ENCODE measurements at regions of chr20 and their contacts with region 1.

Region 1: DNA sequence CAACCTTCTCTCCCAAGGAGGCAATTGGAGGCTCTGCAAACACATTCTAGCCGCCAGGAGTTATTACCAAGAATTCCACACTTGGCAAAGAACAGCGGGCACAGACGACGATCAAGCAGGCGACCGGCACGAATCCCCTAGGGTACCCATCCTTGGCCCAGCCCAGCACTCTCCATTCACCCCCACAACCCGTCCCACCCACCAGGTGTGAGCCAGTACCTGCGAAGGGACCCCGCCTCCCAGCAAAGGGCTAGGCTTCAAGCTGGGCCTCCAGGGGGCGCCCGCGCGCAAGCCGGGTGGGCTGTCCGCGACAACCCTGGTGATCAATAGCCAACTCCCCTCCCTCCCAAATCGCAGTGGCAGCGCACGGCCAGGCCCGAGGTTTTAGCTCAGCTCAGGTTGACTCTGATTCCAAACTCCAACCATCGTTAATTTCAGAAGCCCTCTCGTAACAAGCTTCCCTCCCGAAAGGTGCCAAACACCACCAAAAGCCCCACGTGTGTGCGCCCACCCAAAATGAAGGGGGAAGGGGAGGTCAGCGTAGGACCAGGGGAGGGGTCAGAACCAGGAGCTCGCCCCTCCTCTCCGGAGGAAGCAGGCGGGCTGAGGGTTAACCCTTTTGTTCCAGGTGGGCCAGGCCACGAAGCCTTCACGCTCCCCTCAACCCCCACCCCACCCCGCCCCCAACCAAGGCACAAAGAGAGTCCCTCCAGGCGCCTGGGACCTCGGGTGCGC is 2.1 kb downstream of the SALL4 start:
- DNase-seq: peak; percentile 92
- H3K4me3 ChIP-seq: peak overlapping the region; percentile 62 to 67
- H3K27ac ChIP-seq: no peak overlapping the region; a peak in 1 of 4 replicates
- H3K4me1 ChIP-seq: peaks cover 9 to 14% of the 10 kb centered on the region in 2 experiments; a peak in 2 of 4 replicates
- H3K27me3 ChIP-seq: no peaks in the 10 kb centered on the region
- CTCF ChIP-seq: peak; percentile 90
- EP300 ChIP-seq: no peak
- RAD21 ChIP-seq: peak; percentile 78

Region 2: DNA sequence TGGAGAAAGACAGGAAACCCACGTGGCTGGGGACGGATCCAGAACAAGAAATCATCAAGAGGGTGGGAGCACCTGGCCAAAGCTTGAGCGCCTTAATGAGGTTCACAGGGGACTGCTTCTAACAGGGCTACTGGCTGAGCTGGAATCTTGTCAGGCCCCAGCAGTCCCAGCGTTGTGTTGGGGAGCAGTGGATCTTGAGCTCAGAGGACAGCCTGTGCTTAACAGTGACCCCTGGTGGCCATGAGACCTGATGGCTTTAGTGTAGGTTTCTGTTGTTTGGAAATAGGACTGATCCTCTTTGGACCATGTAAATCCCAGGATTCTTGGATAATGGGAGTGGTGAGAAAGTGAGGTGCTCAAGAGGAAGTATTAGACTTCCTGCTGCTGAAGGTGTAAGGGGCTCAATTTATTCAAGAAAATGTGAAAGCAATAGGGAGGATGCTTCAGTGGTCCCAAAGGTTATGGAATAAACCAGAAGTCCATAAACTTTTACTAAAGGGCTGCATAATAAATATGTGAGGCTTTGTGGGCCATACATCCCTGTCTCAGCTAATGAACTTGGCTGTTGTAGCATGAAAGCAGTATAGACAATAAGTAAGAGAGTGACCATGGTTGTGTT is 473.9 kb before region 1 on chr20:
- CTCF ChIA-PET with region 1: no interaction called
- POLR2A ChIA-PET with region 1: no interaction called
- DNase-seq: peak; percentile 52
- H3K4me3 ChIP-seq: no peak overlapping the region
- H3K27ac ChIP-seq: peak overlapping the region in 1 of 2 experiments; percentile 98; a peak in 2 of 4 replicates
- H3K4me1 ChIP-seq: 0 out of 4 replicates have a peak, but pooled peaks cover 0 to 3% of the 10 kb centered on the region in 2 experiments
- H3K27me3 ChIP-seq: no peaks in the 10 kb centered on the region
- CTCF ChIP-seq: peak; percentile 52
- EP300 ChIP-seq: no peak
- RAD21 ChIP-seq: peak; percentile 51

Region 3: GRCh38 chr20:51715163-51715860 is 84.9 kb before region 1 on chr20:
- CTCF ChIA-PET with region 1: interaction called, 14 read pairs
- POLR2A ChIA-PET with region 1: no interaction called
- DNase-seq: peak; percentile 50
- H3K4me3 ChIP-seq: peak overlapping the region in 1 of 2 experiments; percentile 23; a peak in 2 of 4 replicates
- H3K27ac ChIP-seq: peak overlapping the region in 1 of 2 experiments; percentile 71; a peak in 2 of 4 replicates
- H3K4me1 ChIP-seq: peaks cover 4 to 9% of the 10 kb centered on the region in 2 experiments; a peak in 3 of 4 replicates
- H3K27me3 ChIP-seq: no peaks in the 10 kb centered on the region
- CTCF ChIP-seq: no peak
- EP300 ChIP-seq: no peak
- RAD21 ChIP-seq: no peak

Region 4: GRCh38 chr20:51784299-51784698 is 15.9 kb before region 1 on chr20:
- CTCF ChIA-PET with region 1: interaction called, 28 read pairs
- POLR2A ChIA-PET with region 1: no interaction called
- DNase-seq: no peak
- H3K4me3 ChIP-seq: no peak overlapping the region
- H3K27ac ChIP-seq: no peak overlapping the region
- H3K4me1 ChIP-seq: no peaks in the 10 kb centered on the region
- H3K27me3 ChIP-seq: no peaks in the 10 kb centered on the region
- CTCF ChIP-seq: no peak
- EP300 ChIP-seq: no peak
- RAD21 ChIP-seq: no peak

Region 5: GRCh38 chr20:51823813-51824212 is 23.6 kb after region 1 on chr20:
- CTCF ChIA-PET with region 1: interaction called, 14 read pairs
- POLR2A ChIA-PET with region 1: no interaction called
- DNase-seq: no peak
- H3K4me3 ChIP-seq: no peak overlapping the region
- H3K27ac ChIP-seq: no peak overlapping the region
- H3K4me1 ChIP-seq: no peaks in the 10 kb centered on the region
- H3K27me3 ChIP-seq: no peaks in the 10 kb centered on the region
- CTCF ChIP-seq: no peak
- EP300 ChIP-seq: no peak
- RAD21 ChIP-seq: no peak

Region 6: GRCh38 chr20:51966291-51966971 is 166.2 kb after region 1 on chr20:
- CTCF ChIA-PET with region 1: interaction called, 25 read pairs
- POLR2A ChIA-PET with region 1: no interaction called
- DNase-seq: peak; percentile 74
- H3K4me3 ChIP-seq: no peak overlapping the region; a peak in 1 of 4 replicates
- H3K27ac ChIP-seq: no peak overlapping the region
- H3K4me1 ChIP-seq: peaks cover 0 to 7% of the 10 kb centered on the region in 2 experiments; a peak in 3 of 4 replicates
- H3K27me3 ChIP-seq: no peaks in the 10 kb centered on the region
- CTCF ChIP-seq: peak; percentile 75
- EP300 ChIP-seq: no peak
- RAD21 ChIP-seq: peak; percentile 79

Region 7: DNA sequence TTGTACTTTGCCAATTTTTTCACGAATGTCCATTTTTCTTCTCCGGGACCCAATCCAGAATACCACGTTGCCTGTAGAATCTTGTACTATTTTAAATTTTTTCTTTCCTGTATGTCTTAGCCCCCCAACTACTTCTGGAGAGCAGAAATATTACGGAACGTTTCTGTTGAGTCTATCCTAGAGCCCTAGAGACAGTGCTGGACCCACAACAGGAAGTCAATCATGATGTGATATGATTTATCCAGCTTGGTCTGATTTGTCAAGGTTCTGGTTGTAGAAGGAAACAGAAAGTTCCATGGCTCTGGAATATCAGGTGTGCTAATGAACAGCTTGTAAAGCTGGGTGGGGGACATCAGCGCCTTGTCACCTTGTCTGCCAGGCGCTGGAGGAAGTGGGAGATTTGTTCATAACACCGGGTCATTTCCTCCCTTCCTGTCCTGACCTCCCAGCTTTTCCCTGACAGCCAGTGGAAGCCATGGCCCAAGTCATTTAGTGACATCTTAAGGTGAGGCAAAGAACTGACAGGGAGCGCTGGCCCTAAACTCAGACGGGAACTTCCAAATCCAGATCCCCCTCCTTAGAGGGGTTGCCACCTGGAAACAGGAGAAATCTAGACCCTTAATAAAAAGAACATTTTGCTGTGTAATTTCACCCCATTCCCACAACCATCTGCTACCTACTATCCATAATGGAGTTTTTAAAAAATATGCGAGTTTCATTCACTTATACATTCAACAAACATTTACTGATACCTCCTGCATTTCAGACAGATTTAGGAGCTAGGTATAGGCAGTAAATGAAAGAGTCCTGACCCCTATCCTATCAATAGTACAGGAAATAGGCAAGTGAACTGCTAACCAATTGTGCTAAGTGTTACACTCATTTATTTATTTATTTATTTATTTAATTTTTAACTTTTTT is 260.8 kb after region 1 on chr20:
- CTCF ChIA-PET with region 1: interaction called, 16 read pairs
- POLR2A ChIA-PET with region 1: no interaction called
- DNase-seq: peak; percentile 27
- H3K4me3 ChIP-seq: no peak overlapping the region
- H3K27ac ChIP-seq: no peak overlapping the region
- H3K4me1 ChIP-seq: no peaks in the 10 kb centered on the region
- H3K27me3 ChIP-seq: no peaks in the 10 kb centered on the region
- CTCF ChIP-seq: 0 out of 2 replicates have a peak, but pooled peaks have one; percentile 22
- EP300 ChIP-seq: no peak
- RAD21 ChIP-seq: peak; percentile 60

Measured in SK-N-SH (cell line).